ENCODE measurements at regions of chr17 and their contacts with region 1.

Region 1: DNA sequence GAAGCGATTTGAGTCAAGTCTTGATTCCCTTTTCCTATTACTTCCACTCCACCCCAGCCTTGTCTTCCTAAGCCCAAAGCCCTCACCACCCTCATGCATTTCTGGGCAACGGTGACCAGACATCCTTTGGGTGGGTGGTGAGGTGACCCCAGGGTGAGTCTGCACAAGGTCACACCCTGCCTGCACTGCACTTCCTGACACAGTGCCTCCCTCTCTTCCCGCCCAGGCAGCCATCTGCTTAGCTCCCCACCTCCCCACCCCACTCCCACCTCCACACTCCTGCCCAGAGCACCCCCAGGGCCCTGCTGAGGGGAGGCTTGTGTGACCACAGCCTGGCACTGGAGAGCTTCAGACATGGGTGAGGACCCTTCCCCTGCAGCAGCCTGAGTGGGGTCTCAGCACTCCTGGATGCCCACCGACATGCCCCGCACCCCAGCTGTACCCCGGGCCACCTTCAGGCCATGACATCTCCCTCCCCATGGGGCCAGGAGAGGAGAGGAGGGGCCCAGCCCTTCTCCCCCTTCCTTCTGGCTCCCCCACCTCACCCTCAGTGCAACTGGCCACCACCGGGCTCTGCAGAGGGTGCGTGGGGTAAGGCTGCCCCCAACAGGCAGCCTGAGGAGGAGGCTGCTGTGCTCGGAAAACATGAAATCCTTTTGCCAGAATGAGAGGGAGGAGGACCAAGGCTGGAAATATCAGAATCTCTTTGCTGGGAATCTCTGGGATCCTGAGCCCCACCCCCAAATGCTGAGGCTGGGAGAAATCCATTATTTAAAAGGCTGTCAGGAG is 68.6 kb downstream of the CCT6B start:
- DNase-seq: peak; percentile 3
- ATAC-seq: peak; percentile 87
- H3K4me3 ChIP-seq: no peak overlapping the region
- H3K27ac ChIP-seq: no peak overlapping the region
- H3K4me1 ChIP-seq: no peaks in the 10 kb centered on the region
- H3K27me3 ChIP-seq: peaks cover 44% of the 10 kb centered on the region
- CTCF ChIP-seq: peak; percentile 49 to 78 (median 75); a peak in 5 of 6 replicates
- POLR2A ChIP-seq: no peak
- RAD21 ChIP-seq: peak; percentile 69

Region 2: GRCh38 chr17:33858682-33859081 is 1034.0 kb before region 1 on chr17:
- CTCF ChIA-PET with region 1: no interaction called
- POLR2A ChIA-PET with region 1: no interaction called
- RAD21 ChIA-PET with region 1: no interaction called
- intact Hi-C with region 1: no loop called
- DNase-seq: no peak
- ATAC-seq: no peak
- H3K4me3 ChIP-seq: no peak overlapping the region
- H3K27ac ChIP-seq: no peak overlapping the region
- H3K4me1 ChIP-seq: no peaks in the 10 kb centered on the region
- H3K27me3 ChIP-seq: no peaks in the 10 kb centered on the region
- CTCF ChIP-seq: no peak
- POLR2A ChIP-seq: no peak
- RAD21 ChIP-seq: no peak

Region 3: DNA sequence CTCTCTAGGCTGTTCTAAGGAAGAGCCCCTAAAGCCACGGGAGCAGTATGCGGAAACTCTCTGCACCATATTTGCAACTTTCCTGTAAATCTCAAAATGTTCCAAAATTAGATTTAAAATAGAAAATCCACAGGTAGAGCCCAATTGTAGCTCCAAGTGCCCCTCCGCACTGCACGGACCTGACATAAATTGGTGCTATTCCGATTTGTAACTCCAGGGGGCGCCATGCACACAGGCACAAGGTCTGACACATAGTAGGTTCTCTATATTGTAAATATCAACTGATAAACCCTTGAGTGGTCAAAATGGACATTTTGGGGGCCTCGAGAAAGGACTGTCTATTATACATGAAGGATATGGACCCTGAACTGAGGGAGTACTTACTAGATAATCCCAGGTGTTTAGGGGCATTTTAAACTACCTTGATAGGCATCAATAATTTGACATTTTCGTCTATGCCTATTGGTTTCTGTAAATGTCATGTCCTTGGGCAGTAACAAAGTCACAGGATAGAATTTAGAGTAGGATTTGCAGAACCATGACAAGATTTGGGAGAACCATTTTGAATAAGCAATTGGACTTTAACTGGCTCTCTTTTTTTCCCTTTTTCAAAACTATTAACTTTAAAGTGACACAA is 349.8 kb before region 1 on chr17:
- CTCF ChIA-PET with region 1: interaction called, 20 read pairs
- POLR2A ChIA-PET with region 1: no interaction called
- RAD21 ChIA-PET with region 1: no interaction called
- intact Hi-C with region 1: loop called (anchors 2 kb)
- DNase-seq: no peak
- ATAC-seq: peak; percentile 73
- H3K4me3 ChIP-seq: no peak overlapping the region
- H3K27ac ChIP-seq: no peak overlapping the region
- H3K4me1 ChIP-seq: no peaks in the 10 kb centered on the region
- H3K27me3 ChIP-seq: peaks cover 35% of the 10 kb centered on the region
- CTCF ChIP-seq: peak; percentile 70 to 99 (median 90)
- POLR2A ChIP-seq: no peak
- RAD21 ChIP-seq: peak; percentile 74

Region 4: GRCh38 chr17:34874478-34874877 is 18.2 kb before region 1 on chr17:
- CTCF ChIA-PET with region 1: no interaction called
- POLR2A ChIA-PET with region 1: no interaction called
- RAD21 ChIA-PET with region 1: no interaction called
- intact Hi-C with region 1: no loop called
- DNase-seq: no peak
- ATAC-seq: no peak
- H3K4me3 ChIP-seq: no peak overlapping the region
- H3K27ac ChIP-seq: no peak overlapping the region
- H3K4me1 ChIP-seq: no peaks in the 10 kb centered on the region
- H3K27me3 ChIP-seq: peaks cover 60% of the 10 kb centered on the region
- CTCF ChIP-seq: no peak
- POLR2A ChIP-seq: no peak
- RAD21 ChIP-seq: no peak

Region 5: GRCh38 chr17:35286120-35286781 is 393.6 kb after region 1 on chr17:
- CTCF ChIA-PET with region 1: no interaction called
- POLR2A ChIA-PET with region 1: no interaction called
- RAD21 ChIA-PET with region 1: no interaction called
- intact Hi-C with region 1: no loop called
- DNase-seq: no peak
- ATAC-seq: no peak
- H3K4me3 ChIP-seq: no peak overlapping the region
- H3K27ac ChIP-seq: no peak overlapping the region
- H3K4me1 ChIP-seq: no peaks in the 10 kb centered on the region
- H3K27me3 ChIP-seq: peaks cover 27% of the 10 kb centered on the region
- CTCF ChIP-seq: no peak
- POLR2A ChIP-seq: no peak
- RAD21 ChIP-seq: no peak

Measured in HCT116 (cell line).